ENCODE measurements at regions of chr17 and their contacts with region 1.

Region 1: GRCh38 chr17:48892940-48893645 is 506 bp downstream of the ATP5MC1 start:
- H3K4me3 ChIP-seq: peak overlapping the region; percentile 83
- H3K27ac ChIP-seq: peak overlapping the region; percentile 54; the same call in 1 of the 2 replicates
- H3K4me1 ChIP-seq: 0 out of 2 replicates have a peak, but pooled peaks cover 3% of the 10 kb centered on the region
- CTCF ChIP-seq: peak; percentile 39; the same call in 1 of the 2 replicates

Region 2: DNA sequence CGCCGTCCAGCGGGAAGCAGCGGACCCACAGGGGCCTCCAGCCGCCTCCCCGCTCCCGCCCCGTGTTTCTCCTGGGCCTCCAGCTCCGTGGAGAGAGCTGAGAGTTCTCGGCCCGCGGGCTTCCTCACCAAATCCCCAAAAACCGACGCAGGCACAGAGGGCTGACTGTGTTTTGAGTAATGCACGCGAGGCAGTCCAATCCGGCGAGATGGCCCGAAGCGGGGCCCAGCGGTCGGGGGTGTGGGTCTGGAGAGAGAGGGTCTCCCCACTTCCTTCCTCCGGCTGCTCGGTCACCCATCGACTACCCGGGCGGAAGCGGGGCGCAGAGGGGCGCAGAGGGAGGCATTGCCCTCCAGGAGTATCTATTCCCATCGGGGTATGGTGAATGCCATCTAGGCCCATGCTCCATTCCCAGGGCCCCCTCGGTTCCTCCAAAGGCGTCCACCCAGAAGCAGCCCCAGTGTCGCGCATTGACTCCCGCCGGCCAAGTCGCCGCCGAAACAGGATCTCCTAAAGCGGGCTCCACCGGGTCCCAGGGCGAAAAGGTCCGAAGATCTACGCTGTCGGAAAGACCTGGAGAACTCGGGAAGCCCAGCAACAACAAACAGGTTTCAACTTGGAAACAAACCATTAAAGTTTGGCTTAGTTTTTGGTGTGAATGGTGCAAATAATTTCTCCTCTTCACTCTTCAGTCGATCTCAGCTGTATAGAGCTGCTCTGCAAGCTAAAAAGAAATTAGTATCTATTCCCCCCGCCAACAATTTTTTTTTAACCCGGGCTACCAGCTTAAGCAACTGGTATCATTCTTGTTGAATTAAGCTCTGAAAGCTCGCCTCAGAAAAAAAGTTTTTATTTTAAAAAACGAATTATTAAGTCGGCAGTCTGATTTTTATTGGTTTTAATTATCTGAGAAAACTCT is 145.4 kb before region 1 on chr17:
- CTCF ChIA-PET with region 1: no interaction called
- POLR2A ChIA-PET with region 1: no interaction called
- H3K4me3 ChIP-seq: no peak overlapping the region
- H3K27ac ChIP-seq: no peak overlapping the region
- H3K4me1 ChIP-seq: 0 out of 2 replicates have a peak, but pooled peaks cover 2% of the 10 kb centered on the region
- CTCF ChIP-seq: no peak

Region 3: GRCh38 chr17:48804925-48805411 is 88.1 kb before region 1 on chr17:
- CTCF ChIA-PET with region 1: interaction called, 25 read pairs
- POLR2A ChIA-PET with region 1: interaction called, 9 read pairs
- H3K4me3 ChIP-seq: no peak overlapping the region
- H3K27ac ChIP-seq: no peak overlapping the region
- H3K4me1 ChIP-seq: peaks cover 4% of the 10 kb centered on the region
- CTCF ChIP-seq: peak; percentile 76

Region 4: GRCh38 chr17:48908047-48908843 is 15.2 kb after region 1 on chr17 and contains the start of gene UBE2Z:
- CTCF ChIA-PET with region 1: interaction called, 5 read pairs
- POLR2A ChIA-PET with region 1: interaction called, 106 read pairs
- H3K4me3 ChIP-seq: peak within 1 kb of the TSS; percentile 93
- H3K27ac ChIP-seq: peak within 1 kb of the TSS; percentile 95
- H3K4me1 ChIP-seq: peaks cover 16% of the 10 kb centered on the region
- CTCF ChIP-seq: peak; percentile 83

Region 5: GRCh38 chr17:48928876-48929811 is 36.1 kb after region 1 on chr17:
- CTCF ChIA-PET with region 1: no interaction called
- POLR2A ChIA-PET with region 1: interaction called, 11 read pairs
- H3K4me3 ChIP-seq: no peak overlapping the region
- H3K27ac ChIP-seq: peak overlapping the region; percentile 52
- H3K4me1 ChIP-seq: peaks cover 3% of the 10 kb centered on the region; the same call in 1 of the 2 replicates
- CTCF ChIP-seq: no peak

Region 6: GRCh38 chr17:48944519-48945260 is 51.6 kb after region 1 on chr17 and contains the start of gene SNF8:
- CTCF ChIA-PET with region 1: interaction called, 3 read pairs
- POLR2A ChIA-PET with region 1: interaction called, 13 read pairs
- H3K4me3 ChIP-seq: peak within 1 kb of the TSS; percentile 69
- H3K27ac ChIP-seq: peak within 1 kb of the TSS; percentile 76
- H3K4me1 ChIP-seq: 0 out of 2 replicates have a peak, but pooled peaks cover 3% of the 10 kb centered on the region
- CTCF ChIP-seq: 0 out of 2 replicates have a peak, but pooled peaks have one; percentile 15